Activated naive CD4-positive, alpha-beta T cell treated with anti-CD3 and anti-CD28 coated beads for 36 hours (primary cell): ENCODE measurements at regions of chr10 and their contacts with region 1.

Region 1: GRCh38 chr10:93702211-93703001 is at the start of gene FRA10AC1:
- DNase-seq: peak; percentile 91
- H3K4me3 Mint-ChIP-seq: no peak within 1 kb of the TSS
- H3K27ac Mint-ChIP-seq: no peak within 1 kb of the TSS
- H3K4me1 Mint-ChIP-seq: peaks cover 15% of the 10 kb centered on the region
- H3K27me3 Mint-ChIP-seq: no peaks in the 10 kb centered on the region
- total RNA-seq, gene FRA10AC1: 24.5 to 25.0 TPM

Region 2: GRCh38 chr10:93496322-93497041 is 205.9 kb before region 1 on chr10 and contains the start of gene CEP55:
- CTCF ChIA-PET with region 1: no interaction called
- intact Hi-C with region 1: loop called (anchors 1 kb)
- DNase-seq: peak; percentile 96
- H3K4me3 Mint-ChIP-seq: peak within 1 kb of the TSS; percentile 90
- H3K27ac Mint-ChIP-seq: peak within 1 kb of the TSS; percentile 63
- H3K4me1 Mint-ChIP-seq: peaks cover 18% of the 10 kb centered on the region
- H3K27me3 Mint-ChIP-seq: peaks cover 7% of the 10 kb centered on the region
- total RNA-seq, gene CEP55: 64.4 to 68.2 TPM

Region 3: GRCh38 chr10:93751832-93752231 is 49.4 kb after region 1 on chr10:
- CTCF ChIA-PET with region 1: no interaction called
- intact Hi-C with region 1: no loop called
- DNase-seq: no peak
- H3K4me3 Mint-ChIP-seq: no peak overlapping the region
- H3K27ac Mint-ChIP-seq: no peak overlapping the region
- H3K4me1 Mint-ChIP-seq: peaks cover 9% of the 10 kb centered on the region
- H3K27me3 Mint-ChIP-seq: peaks cover 2% of the 10 kb centered on the region

Region 4: DNA sequence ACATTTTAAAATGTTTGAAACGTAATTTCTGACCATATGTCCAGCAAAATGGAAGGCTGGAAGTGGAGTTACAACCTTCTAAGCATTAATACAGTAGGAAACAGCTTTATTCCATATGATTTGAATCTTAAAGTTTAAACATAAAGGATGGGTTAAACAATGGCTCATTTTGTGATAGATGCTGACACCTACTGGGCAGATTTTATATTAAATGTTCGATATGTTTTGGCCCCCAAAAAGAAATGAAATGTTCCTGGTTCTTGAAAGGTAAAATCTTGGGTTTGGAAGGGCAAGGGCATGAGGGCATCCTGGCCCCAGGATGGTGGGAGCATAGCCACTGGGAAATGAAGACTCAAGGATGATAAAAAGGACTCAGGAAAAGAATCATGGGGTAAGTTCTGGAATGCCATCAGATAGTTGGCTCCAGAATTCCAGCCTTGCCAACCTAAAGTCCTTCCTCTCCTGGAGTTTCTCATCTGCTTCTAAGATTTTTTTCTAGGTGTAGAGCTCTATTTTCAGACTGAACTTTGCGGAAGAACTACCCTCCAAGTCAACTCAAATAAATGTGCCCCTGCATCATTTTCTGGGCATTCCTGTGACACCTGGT is 156.7 kb after region 1 on chr10:
- CTCF ChIA-PET with region 1: no interaction called
- intact Hi-C with region 1: loop called (anchors 1 kb)
- DNase-seq: no peak
- H3K4me3 Mint-ChIP-seq: no peak overlapping the region
- H3K27ac Mint-ChIP-seq: no peak overlapping the region
- H3K4me1 Mint-ChIP-seq: no peaks in the 10 kb centered on the region
- H3K27me3 Mint-ChIP-seq: peaks cover 2% of the 10 kb centered on the region

Region 5: GRCh38 chr10:94320285-94320914 is 618.0 kb after region 1 on chr10:
- CTCF ChIA-PET with region 1: no interaction called
- intact Hi-C with region 1: loop called (anchors 2 kb)
- DNase-seq: peak; percentile 79
- H3K4me3 Mint-ChIP-seq: no peak overlapping the region
- H3K27ac Mint-ChIP-seq: no peak overlapping the region
- H3K4me1 Mint-ChIP-seq: no peaks in the 10 kb centered on the region
- H3K27me3 Mint-ChIP-seq: no peaks in the 10 kb centered on the region

Region 6: DNA sequence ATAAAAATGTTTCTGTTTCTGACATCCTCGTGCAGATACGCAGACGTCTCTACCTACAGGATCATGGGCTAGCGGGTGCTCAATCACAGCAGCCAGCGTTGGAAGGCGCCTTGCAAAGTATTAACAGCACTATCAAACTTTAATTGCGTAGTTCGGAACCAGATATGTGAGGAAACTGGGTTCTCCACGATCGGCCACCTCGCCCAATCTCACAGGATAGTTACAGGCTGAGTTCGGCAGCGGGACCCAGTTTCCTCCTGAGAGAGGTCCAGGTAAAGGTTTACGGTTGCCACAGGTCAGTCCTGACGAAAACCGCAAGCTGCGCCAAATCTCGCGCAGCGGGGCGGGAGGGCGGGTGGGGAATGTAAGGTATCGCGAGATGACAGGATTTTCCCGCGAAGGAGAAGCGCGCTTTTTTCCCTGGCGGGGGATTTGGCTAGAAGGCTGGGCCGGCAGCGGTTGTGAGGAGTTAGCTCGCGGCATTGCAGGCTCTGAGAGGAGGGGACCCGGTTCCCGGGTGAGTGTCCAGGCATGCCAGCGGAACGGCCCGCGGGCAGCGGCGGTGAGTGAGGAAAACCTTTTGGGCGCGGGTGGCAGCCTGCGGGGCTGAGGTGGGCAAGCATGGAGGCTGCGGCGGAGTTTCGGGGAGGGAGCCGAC is 843.1 kb after region 1 on chr10 and contains the start of gene HELLS:
- CTCF ChIA-PET with region 1: no interaction called
- intact Hi-C with region 1: loop called (anchors 2 kb)
- DNase-seq: peak; percentile 85
- H3K4me3 Mint-ChIP-seq: peak within 1 kb of the TSS; percentile 98
- H3K27ac Mint-ChIP-seq: peak within 1 kb of the TSS; percentile 89
- H3K4me1 Mint-ChIP-seq: peaks cover 13% of the 10 kb centered on the region
- H3K27me3 Mint-ChIP-seq: peaks cover 2% of the 10 kb centered on the region
- total RNA-seq, gene HELLS: 109 TPM